Right lobe of liver (tissue), 6 donors: ENCODE measurements at regions of chr3 and their contacts with region 1.

Region 1: GRCh38 chr3:125011941-125012340 is 43.9 kb downstream of the HEG1 start:
- DNase-seq: no peak
- ATAC-seq: no peak
- H3K4me3 ChIP-seq: no peak overlapping the region
- H3K27ac ChIP-seq: no peak overlapping the region
- H3K4me1 ChIP-seq: peaks cover 0 to 28% (median 9%) of the 10 kb centered on the region in 4 donors
- H3K27me3 ChIP-seq: no peaks in the 10 kb centered on the region
- CTCF ChIP-seq: no peak
- POLR2A ChIP-seq: no peak

Region 2: GRCh38 chr3:124995460-124995994 is 16.4 kb before region 1 on chr3:
- intact Hi-C with region 1: loop called in 1 of 2 experiments (anchors 1 kb)
- DNase-seq: peak in 2 of 3 donors; percentile 54 to 68
- ATAC-seq: peak; percentile 81 to 90 (median 86)
- H3K4me3 ChIP-seq: peak overlapping the region in 1 of 3 donors; percentile 27
- H3K27ac ChIP-seq: peak overlapping the region in 1 of 3 donors; percentile 44
- H3K4me1 ChIP-seq: peaks cover 0 to 25% (median 10%) of the 10 kb centered on the region in 4 donors
- H3K27me3 ChIP-seq: no peaks in the 10 kb centered on the region
- CTCF ChIP-seq: peak; percentile 78 to 85 (median 82)
- POLR2A ChIP-seq: no peak

Region 3: GRCh38 chr3:125437631-125438435 is 425.9 kb after region 1 on chr3:
- intact Hi-C with region 1: loop called in 1 of 2 experiments (anchors 10 kb)
- DNase-seq: peak; percentile 53 to 84 (median 71)
- ATAC-seq: peak; percentile 82 to 88 (median 84)
- H3K4me3 ChIP-seq: no peak overlapping the region
- H3K27ac ChIP-seq: peak overlapping the region; percentile 3 to 70 (median 56)
- H3K4me1 ChIP-seq: peaks cover 0 to 39% (median 17%) of the 10 kb centered on the region in 4 donors
- H3K27me3 ChIP-seq: no peaks in the 10 kb centered on the region
- CTCF ChIP-seq: peak; percentile 94 to 100 (median 99)
- POLR2A ChIP-seq: no peak